GM18951 (cell line): ENCODE measurements at regions of chr5 and their contacts with region 1.

Region 1: GRCh38 chr5:57137401-57137800 is 36.5 kb upstream of the GPBP1 start:
- POLR2A ChIP-seq: no peak

Region 2: DNA sequence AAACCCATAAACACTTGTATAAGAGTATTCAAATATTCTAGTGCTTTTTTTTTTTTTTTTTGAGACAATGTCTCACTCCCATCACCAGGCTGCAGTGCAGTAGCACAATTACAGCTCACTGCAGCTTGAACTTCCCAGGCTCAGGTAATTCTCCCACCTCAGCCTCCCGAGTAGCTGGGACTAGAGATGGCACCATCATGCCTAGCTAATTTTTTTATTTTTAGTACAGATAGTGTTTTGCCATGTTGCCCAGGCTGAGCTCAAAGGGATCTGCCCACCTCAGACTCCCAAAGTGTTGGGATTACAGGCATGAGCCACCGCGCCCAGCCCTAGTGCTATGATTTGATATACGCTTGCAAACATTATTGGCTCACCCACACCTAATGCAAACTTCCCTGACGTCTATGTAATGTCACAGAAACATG is 1154.4 kb before region 1 on chr5:
- in situ Hi-C with region 1: no loop called
- POLR2A ChIP-seq: no peak

Region 3: GRCh38 chr5:56893251-56893951 is 244.0 kb before region 1 on chr5:
- in situ Hi-C with region 1: loop called (anchors 10 kb)
- POLR2A ChIP-seq: no peak